ENCODE measurements at regions of chr7 and their contacts with region 1.

Region 1: DNA sequence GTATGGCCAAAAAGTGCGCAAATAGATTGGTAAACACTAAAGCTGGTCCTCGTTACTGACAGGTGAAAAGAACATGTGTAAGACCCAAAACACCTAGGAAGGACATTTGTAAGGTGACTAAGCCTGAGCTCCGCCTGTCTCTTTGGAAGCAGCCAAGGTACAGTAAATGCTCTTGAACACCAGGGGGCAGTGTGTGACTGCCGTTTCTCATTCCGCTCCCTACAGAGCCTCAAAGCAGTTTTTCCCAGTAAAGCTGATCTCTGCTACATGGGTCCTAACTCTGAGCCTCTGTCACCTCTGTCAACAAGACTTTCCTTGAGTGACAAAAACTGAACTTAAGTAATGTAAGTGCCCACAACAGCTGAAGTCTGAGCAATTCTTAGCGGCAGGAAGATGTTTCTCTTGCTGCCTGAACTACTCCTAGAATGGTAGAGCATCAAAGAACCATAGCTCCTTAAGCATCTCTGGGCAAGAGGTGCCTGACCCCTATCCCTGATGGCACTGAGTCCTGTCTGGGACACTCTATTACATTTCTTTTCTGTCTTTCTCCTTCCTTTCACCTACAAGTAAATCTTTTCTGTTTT is 238.0 kb upstream of the INHBA start:
- DNase-seq: peak; percentile 25
- ATAC-seq: peak; percentile 87
- H3K4me3 ChIP-seq: no peak overlapping the region
- H3K27ac ChIP-seq: no peak overlapping the region
- H3K4me1 ChIP-seq: no peaks in the 10 kb centered on the region
- H3K27me3 ChIP-seq: peaks cover 0 to 2% of the 10 kb centered on the region in 2 experiments; a peak in 1 of 4 replicates
- CTCF ChIP-seq: peak; percentile 78 to 87 (median 86)
- EP300 ChIP-seq: no peak
- POLR2A ChIP-seq: no peak
- RAD21 ChIP-seq: peak; percentile 77

Region 2: DNA sequence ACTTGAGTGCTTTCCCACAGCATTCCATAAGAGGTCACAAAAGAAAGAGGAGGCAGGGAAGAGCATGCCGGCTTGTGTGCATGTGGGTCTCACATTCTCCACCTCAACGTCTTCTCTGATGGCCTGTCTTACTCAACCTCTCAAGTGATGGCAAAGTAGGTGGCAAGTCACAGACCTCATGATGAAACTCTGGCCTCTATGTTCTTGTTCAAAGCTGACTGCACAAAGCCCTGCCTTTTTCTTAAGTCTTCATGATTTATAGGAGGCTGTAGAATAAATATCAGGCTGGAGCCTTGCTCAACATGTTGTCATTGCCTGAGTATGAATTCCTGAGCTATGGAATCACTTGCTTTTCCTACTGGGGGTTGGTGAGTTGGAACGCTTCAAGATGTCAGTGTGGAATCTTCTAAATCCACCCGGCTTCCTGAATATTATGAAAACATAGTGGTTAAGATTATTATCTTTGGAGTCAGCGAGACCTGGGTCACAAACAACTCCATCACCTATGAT is 24.3 kb before region 1 on chr7:
- CTCF ChIA-PET with region 1: interaction called, 28 read pairs
- POLR2A ChIA-PET with region 1: no interaction called
- RAD21 ChIA-PET with region 1: interaction called, 7 read pairs
- SMC1A ChIA-PET with region 1: interaction called, 5 read pairs
- in situ Hi-C with region 1: no loop called
- intact Hi-C with region 1: no loop called
- DNase-seq: no peak
- ATAC-seq: no peak
- H3K4me3 ChIP-seq: no peak overlapping the region
- H3K27ac ChIP-seq: no peak overlapping the region
- H3K4me1 ChIP-seq: no peaks in the 10 kb centered on the region
- H3K27me3 ChIP-seq: no peaks in the 10 kb centered on the region; a peak in 1 of 4 replicates
- CTCF ChIP-seq: no peak
- EP300 ChIP-seq: no peak
- POLR2A ChIP-seq: no peak
- RAD21 ChIP-seq: no peak

Region 3: GRCh38 chr7:41930538-41931262 is 10.2 kb before region 1 on chr7:
- CTCF ChIA-PET with region 1: interaction called, 66 read pairs
- POLR2A ChIA-PET with region 1: interaction called, 3 read pairs
- RAD21 ChIA-PET with region 1: interaction called, 11 read pairs
- SMC1A ChIA-PET with region 1: interaction called, 11 read pairs
- in situ Hi-C with region 1: no loop called
- intact Hi-C with region 1: no loop called
- DNase-seq: no peak
- ATAC-seq: no peak
- H3K4me3 ChIP-seq: no peak overlapping the region
- H3K27ac ChIP-seq: no peak overlapping the region
- H3K4me1 ChIP-seq: peaks cover 3% of the 10 kb centered on the region; the same call in 1 of the 2 replicates
- H3K27me3 ChIP-seq: no peaks in the 10 kb centered on the region
- CTCF ChIP-seq: no peak
- EP300 ChIP-seq: no peak
- POLR2A ChIP-seq: no peak
- RAD21 ChIP-seq: no peak

Region 4: GRCh38 chr7:42843205-42843800 is 902.5 kb after region 1 on chr7:
- CTCF ChIA-PET with region 1: interaction called, 13 read pairs
- POLR2A ChIA-PET with region 1: no interaction called
- RAD21 ChIA-PET with region 1: interaction called, 7 read pairs
- SMC1A ChIA-PET with region 1: interaction called, 5 read pairs
- in situ Hi-C with region 1: loop called (anchors 10 kb)
- intact Hi-C with region 1: loop called (anchors 2 kb)
- DNase-seq: no peak
- ATAC-seq: peak; percentile 94
- H3K4me3 ChIP-seq: no peak overlapping the region
- H3K27ac ChIP-seq: no peak overlapping the region
- H3K4me1 ChIP-seq: no peaks in the 10 kb centered on the region
- H3K27me3 ChIP-seq: peaks cover 0 to 2% of the 10 kb centered on the region in 2 experiments; a peak in 2 of 4 replicates
- CTCF ChIP-seq: peak; percentile 40 to 60 (median 50)
- EP300 ChIP-seq: no peak
- POLR2A ChIP-seq: no peak
- RAD21 ChIP-seq: peak; percentile 59